Uterus (tissue), 4 donors: ENCODE measurements at regions of chr2 and their contacts with region 1.

Region 1: GRCh38 chr2:43484323-43484930 is 111.4 kb downstream of the THADA start:
- DNase-seq: no peak
- H3K4me3 ChIP-seq: no peak overlapping the region
- H3K27ac ChIP-seq: peak overlapping the region; percentile 68 to 81
- H3K4me1 ChIP-seq: peaks cover 0 to 7% of the 10 kb centered on the region in 2 donors
- H3K27me3 ChIP-seq: no peaks in the 10 kb centered on the region
- CTCF ChIP-seq: peak; percentile 63 to 87 (median 74)
- POLR2A ChIP-seq: no peak

Region 2: GRCh38 chr2:42959234-42960001 is 525.0 kb before region 1 on chr2:
- intact Hi-C with region 1: loop called (anchors 10 kb)
- DNase-seq: peak; percentile 87 to 92
- H3K4me3 ChIP-seq: no peak overlapping the region
- H3K27ac ChIP-seq: peak overlapping the region; percentile 93
- H3K4me1 ChIP-seq: peaks cover 42 to 47% of the 10 kb centered on the region in 2 donors
- H3K27me3 ChIP-seq: no peaks in the 10 kb centered on the region
- CTCF ChIP-seq: no peak
- POLR2A ChIP-seq: no peak

Region 3: GRCh38 chr2:43305517-43305916 is 178.9 kb before region 1 on chr2:
- intact Hi-C with region 1: no loop called
- DNase-seq: peak; percentile 62 to 72
- H3K4me3 ChIP-seq: no peak overlapping the region
- H3K27ac ChIP-seq: peak overlapping the region; percentile 82 to 96
- H3K4me1 ChIP-seq: peaks cover 7 to 14% of the 10 kb centered on the region in 2 donors
- H3K27me3 ChIP-seq: no peaks in the 10 kb centered on the region
- CTCF ChIP-seq: no peak
- POLR2A ChIP-seq: no peak

Region 4: DNA sequence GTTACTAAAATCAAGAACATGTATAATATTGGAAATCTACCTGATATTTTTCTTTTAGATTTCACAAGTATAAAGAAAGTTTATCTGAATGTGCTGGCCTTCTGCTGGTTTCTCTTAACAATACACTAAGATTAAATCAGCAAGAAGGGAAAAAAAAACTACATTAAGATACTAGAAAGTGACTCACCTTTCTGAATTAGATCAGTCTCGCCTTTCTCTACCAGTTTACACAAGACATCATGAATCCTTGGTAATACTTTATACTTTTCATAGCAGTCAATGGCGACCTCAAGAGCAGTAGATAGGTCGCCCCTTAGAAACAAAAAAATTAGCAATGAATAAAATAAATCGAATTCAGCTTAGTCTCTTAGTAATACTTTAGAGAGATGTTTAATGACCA is 450.1 kb after region 1 on chr2:
- intact Hi-C with region 1: no loop called
- DNase-seq: no peak
- H3K4me3 ChIP-seq: no peak overlapping the region
- H3K27ac ChIP-seq: no peak overlapping the region
- H3K4me1 ChIP-seq: no peaks in the 10 kb centered on the region
- H3K27me3 ChIP-seq: no peaks in the 10 kb centered on the region
- CTCF ChIP-seq: no peak
- POLR2A ChIP-seq: no peak